ENCODE measurements at regions of chr12 and their contacts with region 1.

Region 1: DNA sequence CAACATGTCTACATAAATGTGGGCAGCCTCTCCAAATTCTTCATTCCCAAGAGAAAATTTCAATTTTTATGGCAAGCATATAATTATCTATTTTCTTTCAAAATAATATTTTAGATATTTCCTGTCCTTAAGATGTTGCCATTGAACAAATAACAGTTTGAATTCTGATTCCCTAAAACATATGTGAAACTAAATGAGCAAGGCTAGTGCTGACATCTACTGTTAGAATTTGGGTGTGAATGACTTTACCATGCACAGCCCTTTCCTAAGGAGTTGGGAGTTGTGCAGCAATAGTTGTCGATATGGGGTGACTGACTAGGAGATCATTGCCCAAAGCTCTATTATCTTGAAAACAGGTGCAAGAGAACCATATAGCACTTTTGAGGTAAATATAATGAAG is 108.2 kb upstream of the SLC38A4 start:
- DNase-seq: peak; percentile 77
- ATAC-seq: peak; percentile 93
- H3K4me3 ChIP-seq: no peak overlapping the region
- H3K27ac ChIP-seq: no peak overlapping the region
- H3K4me1 ChIP-seq: peaks cover 12% of the 10 kb centered on the region
- H3K27me3 ChIP-seq: no peaks in the 10 kb centered on the region
- CTCF ChIP-seq: peak; percentile 76

Region 2: DNA sequence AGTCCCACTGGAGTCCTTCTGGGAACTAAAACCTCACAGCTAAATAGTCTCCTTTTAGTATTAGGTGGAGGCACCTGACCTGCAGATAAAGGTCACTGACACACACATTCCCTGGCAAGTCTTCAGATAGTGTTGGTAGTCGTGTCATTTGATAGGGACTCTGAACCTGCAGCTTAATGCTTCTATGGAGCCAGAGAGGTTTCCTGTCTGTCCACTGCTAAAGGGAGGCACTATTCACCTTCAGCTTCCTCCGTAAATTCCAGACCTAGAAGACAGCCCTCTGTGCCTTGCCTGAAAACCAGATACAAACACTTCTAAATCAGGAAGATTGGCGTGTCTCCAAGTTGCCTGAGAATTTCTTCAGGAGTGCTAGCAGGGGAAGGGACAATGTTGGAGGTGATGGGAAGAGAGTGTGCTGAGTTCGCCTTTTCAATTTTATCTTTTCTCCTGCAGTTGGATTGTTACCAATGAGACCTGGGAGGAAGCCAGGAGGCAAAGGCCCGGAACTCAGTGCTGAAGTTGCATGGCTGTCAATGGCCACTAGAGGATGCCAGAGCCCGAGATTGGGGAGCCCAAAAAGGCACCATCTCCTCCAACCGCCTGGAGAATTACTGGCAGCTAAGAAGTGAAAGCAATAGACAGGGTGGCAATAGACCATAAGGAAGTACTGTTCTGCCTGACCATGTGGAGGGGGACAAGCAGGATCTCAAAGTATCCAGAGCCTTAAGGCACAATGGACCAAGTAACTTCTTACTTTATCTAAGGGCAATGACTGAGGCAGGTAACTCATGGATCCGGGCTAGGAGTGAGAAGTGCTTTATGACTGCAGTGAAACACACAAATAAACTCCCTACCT is 862.0 kb before region 1 on chr12:
- CTCF ChIA-PET with region 1: no interaction called
- POLR2A ChIA-PET with region 1: no interaction called
- intact Hi-C with region 1: loop called (anchors 10 kb)
- DNase-seq: peak; percentile 84
- ATAC-seq: peak; percentile 83
- H3K4me3 ChIP-seq: no peak overlapping the region
- H3K27ac ChIP-seq: no peak overlapping the region
- H3K4me1 ChIP-seq: 0 out of 2 replicates have a peak, but pooled peaks cover 5% of the 10 kb centered on the region
- H3K27me3 ChIP-seq: no peaks in the 10 kb centered on the region
- CTCF ChIP-seq: peak; percentile 96

Region 3: GRCh38 chr12:46549527-46550265 is 384.3 kb before region 1 on chr12:
- CTCF ChIA-PET with region 1: no interaction called
- POLR2A ChIA-PET with region 1: interaction called, 19 read pairs
- intact Hi-C with region 1: loop called (anchors 10 kb)
- DNase-seq: peak; percentile 87
- ATAC-seq: peak; percentile 72
- H3K4me3 ChIP-seq: no peak overlapping the region
- H3K27ac ChIP-seq: peak overlapping the region; percentile 94
- H3K4me1 ChIP-seq: peaks cover 82% of the 10 kb centered on the region
- H3K27me3 ChIP-seq: no peaks in the 10 kb centered on the region
- CTCF ChIP-seq: no peak

Region 4: GRCh38 chr12:46556105-46556559 is 377.8 kb before region 1 on chr12:
- CTCF ChIA-PET with region 1: interaction called, 3 read pairs
- POLR2A ChIA-PET with region 1: no interaction called
- intact Hi-C with region 1: loop called (anchors 10 kb)
- DNase-seq: peak; percentile 93
- ATAC-seq: peak; percentile 76
- H3K4me3 ChIP-seq: peak overlapping the region; percentile 41
- H3K27ac ChIP-seq: peak overlapping the region; percentile 96
- H3K4me1 ChIP-seq: peaks cover 87% of the 10 kb centered on the region
- H3K27me3 ChIP-seq: no peaks in the 10 kb centered on the region
- CTCF ChIP-seq: no peak

Region 5: GRCh38 chr12:46675736-46676135 is 258.2 kb before region 1 on chr12:
- CTCF ChIA-PET with region 1: interaction called, 5 read pairs
- POLR2A ChIA-PET with region 1: no interaction called
- intact Hi-C with region 1: loop called (anchors 2 kb)
- DNase-seq: peak; percentile 71
- ATAC-seq: no peak
- H3K4me3 ChIP-seq: no peak overlapping the region
- H3K27ac ChIP-seq: peak overlapping the region; percentile 68
- H3K4me1 ChIP-seq: peaks cover 44% of the 10 kb centered on the region
- H3K27me3 ChIP-seq: no peaks in the 10 kb centered on the region
- CTCF ChIP-seq: peak; percentile 65

Region 6: GRCh38 chr12:46682148-46682547 is 251.8 kb before region 1 on chr12:
- CTCF ChIA-PET with region 1: interaction called, 5 read pairs
- POLR2A ChIA-PET with region 1: no interaction called
- intact Hi-C with region 1: loop called (anchors 1 kb)
- DNase-seq: no peak
- ATAC-seq: no peak
- H3K4me3 ChIP-seq: no peak overlapping the region
- H3K27ac ChIP-seq: no peak overlapping the region
- H3K4me1 ChIP-seq: peaks cover 12% of the 10 kb centered on the region
- H3K27me3 ChIP-seq: no peaks in the 10 kb centered on the region
- CTCF ChIP-seq: no peak

Region 7: DNA sequence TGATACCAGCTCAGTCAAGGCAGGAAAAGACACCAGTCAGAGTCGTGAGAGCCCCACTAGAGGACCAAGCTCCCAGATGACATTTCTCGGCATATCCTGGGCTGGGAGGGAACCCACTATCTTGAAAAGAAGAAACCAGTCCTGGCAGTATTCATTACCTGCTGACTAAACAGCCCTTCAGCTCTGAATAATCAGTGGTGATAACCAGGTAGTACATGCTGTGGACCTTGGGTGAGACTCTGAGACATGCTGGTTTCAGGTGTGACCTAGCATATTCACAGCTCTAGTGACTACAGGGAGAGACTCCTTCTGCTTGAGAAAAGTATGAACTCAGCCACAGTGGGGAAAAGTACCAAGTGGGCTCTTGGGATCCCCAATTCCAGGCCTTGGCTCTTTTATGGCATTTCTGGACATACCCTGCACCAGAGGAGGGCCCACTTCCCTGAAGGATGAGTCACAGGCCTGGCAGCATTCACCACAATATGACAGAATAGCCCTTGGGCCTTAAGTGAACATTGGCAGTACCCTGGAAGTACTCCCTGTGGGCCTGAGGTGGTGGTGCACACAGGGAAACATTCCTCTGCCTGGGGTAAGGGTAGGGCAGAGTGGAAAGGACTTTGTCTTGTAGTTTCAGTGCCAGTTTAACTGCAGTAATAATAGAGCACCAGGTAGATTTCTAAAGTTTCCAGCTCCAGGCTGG is 25.6 kb before region 1 on chr12:
- CTCF ChIA-PET with region 1: no interaction called
- POLR2A ChIA-PET with region 1: no interaction called
- intact Hi-C with region 1: no loop called
- DNase-seq: peak; percentile 82
- ATAC-seq: peak; percentile 78
- H3K4me3 ChIP-seq: no peak overlapping the region
- H3K27ac ChIP-seq: peak overlapping the region; percentile 60
- H3K4me1 ChIP-seq: peaks cover 16% of the 10 kb centered on the region
- H3K27me3 ChIP-seq: no peaks in the 10 kb centered on the region
- CTCF ChIP-seq: no peak